ENCODE measurements at regions of chr22 and their contacts with region 1.

Region 1: DNA sequence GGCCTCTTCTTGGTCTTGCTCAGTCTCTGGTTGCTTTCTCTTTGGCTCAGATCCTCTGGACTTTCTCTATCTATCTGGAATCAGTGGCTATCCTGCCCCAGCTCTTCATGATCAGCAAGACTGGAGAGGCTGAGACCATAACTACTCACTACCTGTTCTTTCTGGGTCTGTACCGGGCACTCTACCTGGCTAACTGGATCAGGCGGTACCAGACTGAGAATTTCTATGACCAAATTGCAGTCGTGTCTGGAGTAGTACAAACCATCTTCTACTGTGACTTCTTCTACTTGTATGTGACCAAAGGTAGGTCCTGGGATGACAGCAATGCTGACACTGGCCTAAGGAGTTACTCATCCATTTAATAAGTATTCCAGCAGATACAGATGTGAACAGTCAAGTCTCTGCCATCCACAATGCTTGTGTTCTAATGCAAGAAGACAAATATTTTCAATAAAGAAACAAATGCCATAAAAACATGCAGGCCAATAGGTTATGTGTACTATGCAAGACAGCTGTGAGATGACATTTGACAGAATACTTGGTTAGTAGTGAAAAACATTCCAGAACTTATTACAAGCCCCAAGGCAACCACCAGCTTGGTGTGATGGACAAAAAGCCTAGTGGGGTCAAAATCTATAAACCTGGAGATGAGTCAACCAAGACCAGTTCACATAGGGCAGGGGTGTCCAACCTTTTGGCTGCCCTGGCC is 13.4 kb downstream of the KDELR3 start:
- DNase-seq: no peak

Region 2: DNA sequence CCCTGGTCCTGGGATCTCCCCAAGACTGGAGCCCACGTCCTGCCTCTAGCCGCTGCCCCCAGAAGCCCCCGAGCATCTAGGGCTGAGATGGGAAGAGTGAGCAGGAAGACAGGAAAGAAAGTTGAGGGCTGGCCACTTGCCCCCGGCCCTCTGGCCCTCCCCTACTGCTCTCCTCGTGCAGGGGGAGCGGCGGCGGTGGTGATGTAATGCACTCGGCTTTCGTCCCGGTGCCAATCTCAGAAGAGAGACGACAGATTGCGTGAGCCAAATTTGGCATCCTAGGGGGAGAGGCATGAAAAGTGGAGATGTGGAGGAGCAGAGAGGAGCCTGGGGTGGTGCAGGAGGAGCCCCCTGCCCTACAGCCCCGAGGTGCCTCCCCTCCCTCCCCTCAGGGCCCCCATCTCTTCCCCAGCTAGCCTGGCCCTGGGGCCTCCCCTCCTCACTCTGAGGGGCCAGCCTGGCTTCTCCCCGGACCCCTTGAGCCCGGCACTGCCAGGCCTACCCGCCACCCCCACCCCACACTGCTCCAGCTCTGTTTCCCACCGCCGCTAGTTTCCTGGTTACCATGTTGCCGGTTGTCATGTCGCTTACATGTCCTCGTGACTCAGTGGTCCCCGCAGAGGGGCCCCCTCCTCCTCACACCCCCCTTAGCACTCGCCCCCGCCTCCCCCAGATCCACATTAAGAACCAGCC is 28.8 kb before region 1 on chr22:
- CTCF ChIA-PET with region 1: no interaction called
- POLR2A ChIA-PET with region 1: no interaction called
- DNase-seq: no peak

Region 3: GRCh38 chr22:38462960-38463784 is 18.1 kb before region 1 on chr22:
- CTCF ChIA-PET with region 1: interaction called, 5 read pairs
- POLR2A ChIA-PET with region 1: interaction called, 10 read pairs
- DNase-seq: peak; percentile 84

Region 4: GRCh38 chr22:38513063-38513462 is 31.7 kb after region 1 on chr22:
- CTCF ChIA-PET with region 1: no interaction called
- POLR2A ChIA-PET with region 1: no interaction called
- DNase-seq: peak; percentile 45

Measured in HEK293T (cell line).